A549 (cell line): ENCODE measurements at regions of chr2 and their contacts with region 1.

Region 1: DNA sequence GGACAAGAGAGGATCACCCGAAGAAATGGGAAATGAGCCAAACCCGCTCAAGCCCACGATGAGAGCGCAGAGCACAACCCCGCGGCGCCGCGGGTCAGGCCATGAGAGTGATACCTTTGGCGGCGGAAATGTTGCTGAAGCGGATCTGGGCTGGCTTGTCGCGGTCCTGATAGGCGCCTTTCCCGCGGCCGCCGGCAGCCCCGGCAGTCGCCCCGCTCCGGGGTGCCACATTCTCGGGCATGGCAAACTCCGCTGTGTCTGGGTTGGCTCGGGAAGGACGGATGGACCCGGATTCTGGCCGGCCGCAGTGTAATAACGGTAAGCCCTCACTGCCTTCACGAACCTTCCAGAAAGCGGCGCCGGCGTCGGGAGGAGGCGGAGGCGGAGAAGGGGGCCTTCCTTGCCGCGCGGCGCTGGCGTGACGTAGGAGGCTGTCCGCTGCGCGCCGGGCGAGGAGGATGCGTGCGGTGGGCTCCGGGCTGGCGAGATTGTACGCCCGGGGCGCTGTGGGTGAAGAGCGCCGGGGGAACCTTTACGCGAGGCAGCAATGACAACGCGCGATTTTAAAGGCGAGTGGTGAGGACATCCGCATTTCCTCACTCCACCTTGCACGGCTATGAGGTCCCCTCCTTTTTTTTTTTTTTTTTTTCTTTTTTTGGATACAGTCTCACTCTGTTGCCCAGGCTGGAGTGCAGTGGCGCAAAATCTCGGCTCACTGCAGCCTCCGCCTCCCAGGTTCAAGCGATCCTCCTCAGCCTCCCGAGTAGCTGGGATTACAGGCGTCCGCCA is at the start of gene CCT4:
- DNase-seq: peak; percentile 77 to 93
- ATAC-seq: peak; percentile 85 to 92
- H3K4me3 ChIP-seq: peak within 1 kb of the TSS; percentile 88
- H3K27ac ChIP-seq: peak within 1 kb of the TSS; percentile 89 to 93
- H3K4me1 ChIP-seq: peaks cover 27% of the 10 kb centered on the region
- CTCF ChIP-seq: no peak
- EP300 ChIP-seq: no peak
- POLR2A ChIP-seq: peak; percentile 90
- RAD21 ChIP-seq: no peak
- polyA plus RNA-seq, gene CCT4: 307 and 352 TPM in 2 replicates

Region 2: GRCh38 chr2:61354543-61355197 is 533.8 kb before region 1 on chr2:
- CTCF ChIA-PET with region 1: no interaction called
- POLR2A ChIA-PET with region 1: interaction called, 12 read pairs
- DNase-seq: no peak
- ATAC-seq: no peak
- H3K4me3 ChIP-seq: no peak overlapping the region
- H3K27ac ChIP-seq: no peak overlapping the region
- H3K4me1 ChIP-seq: no peaks in the 10 kb centered on the region
- CTCF ChIP-seq: no peak
- EP300 ChIP-seq: no peak
- POLR2A ChIP-seq: no peak; the same call in 1 of the 2 replicates
- RAD21 ChIP-seq: no peak

Region 3: DNA sequence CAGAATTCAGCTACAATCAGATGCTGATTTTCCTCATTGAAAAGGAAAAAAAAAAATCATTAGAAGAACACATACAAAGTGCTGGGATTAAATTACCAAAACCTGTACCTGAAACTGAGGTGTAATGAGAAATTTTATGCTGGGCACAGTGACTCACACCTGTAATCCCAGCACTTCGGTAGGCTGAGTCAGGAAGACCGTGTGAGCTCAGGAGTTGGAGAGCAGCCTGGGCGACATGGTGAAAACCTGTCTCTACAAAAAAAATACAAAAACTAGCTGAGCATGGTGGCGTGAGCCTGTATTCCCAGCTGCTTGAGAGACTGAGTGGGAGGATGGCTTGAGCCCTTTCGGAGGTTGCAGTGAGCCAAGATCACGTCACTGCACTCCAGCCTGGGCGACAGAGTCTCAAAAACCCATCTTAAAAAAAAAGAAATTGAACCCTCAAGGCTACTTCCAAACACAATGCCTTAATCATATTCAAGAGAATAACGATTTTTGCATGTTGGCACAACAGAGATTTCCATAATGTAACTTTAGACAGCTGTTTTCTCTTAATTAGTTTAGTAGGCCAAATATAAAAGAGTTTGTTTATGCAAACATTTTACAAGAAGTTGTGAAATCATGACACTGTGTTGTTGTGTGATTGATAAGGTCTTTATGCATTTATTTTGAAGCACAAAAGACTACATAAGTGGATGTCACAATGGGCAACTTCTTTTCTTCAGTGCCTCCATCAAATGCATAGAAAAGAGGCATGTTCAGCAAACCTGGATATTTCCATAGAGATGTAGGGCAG is 98.5 kb before region 1 on chr2:
- CTCF ChIA-PET with region 1: no interaction called
- POLR2A ChIA-PET with region 1: no interaction called
- DNase-seq: no peak
- ATAC-seq: no peak
- H3K4me3 ChIP-seq: no peak overlapping the region
- H3K27ac ChIP-seq: no peak overlapping the region
- H3K4me1 ChIP-seq: peaks cover 8% of the 10 kb centered on the region
- CTCF ChIP-seq: no peak
- EP300 ChIP-seq: no peak
- POLR2A ChIP-seq: no peak
- RAD21 ChIP-seq: no peak